ENCODE measurements at regions of chr14 and their contacts with region 1.

Region 1: GRCh38 chr14:30270200-30271161 is 288.5 kb upstream of the G2E3 start:
- DNase-seq: peak; percentile 88
- ATAC-seq: peak; percentile 100
- H3K4me3 ChIP-seq: peak overlapping the region; percentile 30; the same call in 1 of the 2 replicates
- H3K27ac ChIP-seq: no peak overlapping the region
- H3K4me1 ChIP-seq: peaks cover 9% of the 10 kb centered on the region; the same call in 1 of the 2 replicates
- H3K27me3 ChIP-seq: peaks cover 29% of the 10 kb centered on the region
- CTCF ChIP-seq: peak; percentile 92

Region 2: GRCh38 chr14:30005114-30005808 is 265.2 kb before region 1 on chr14:
- CTCF ChIA-PET with region 1: no interaction called
- POLR2A ChIA-PET with region 1: no interaction called
- intact Hi-C with region 1: loop called (anchors 5 kb)
- DNase-seq: peak; percentile 60
- ATAC-seq: peak; percentile 93
- H3K4me3 ChIP-seq: no peak overlapping the region
- H3K27ac ChIP-seq: no peak overlapping the region
- H3K4me1 ChIP-seq: 0 out of 2 replicates have a peak, but pooled peaks cover 4% of the 10 kb centered on the region
- H3K27me3 ChIP-seq: peaks cover 6% of the 10 kb centered on the region
- CTCF ChIP-seq: peak; percentile 86

Region 3: GRCh38 chr14:30223385-30223813 is 47.1 kb before region 1 on chr14:
- CTCF ChIA-PET with region 1: interaction called, 14 read pairs
- POLR2A ChIA-PET with region 1: no interaction called
- intact Hi-C with region 1: loop called (anchors 2 kb)
- DNase-seq: peak; percentile 99
- ATAC-seq: peak; percentile 93
- H3K4me3 ChIP-seq: 0 out of 2 replicates have a peak overlapping the region, but pooled peaks have one; percentile 7
- H3K27ac ChIP-seq: peak overlapping the region; percentile 47
- H3K4me1 ChIP-seq: peaks cover 47% of the 10 kb centered on the region
- H3K27me3 ChIP-seq: no peaks in the 10 kb centered on the region
- CTCF ChIP-seq: no peak

Region 4: DNA sequence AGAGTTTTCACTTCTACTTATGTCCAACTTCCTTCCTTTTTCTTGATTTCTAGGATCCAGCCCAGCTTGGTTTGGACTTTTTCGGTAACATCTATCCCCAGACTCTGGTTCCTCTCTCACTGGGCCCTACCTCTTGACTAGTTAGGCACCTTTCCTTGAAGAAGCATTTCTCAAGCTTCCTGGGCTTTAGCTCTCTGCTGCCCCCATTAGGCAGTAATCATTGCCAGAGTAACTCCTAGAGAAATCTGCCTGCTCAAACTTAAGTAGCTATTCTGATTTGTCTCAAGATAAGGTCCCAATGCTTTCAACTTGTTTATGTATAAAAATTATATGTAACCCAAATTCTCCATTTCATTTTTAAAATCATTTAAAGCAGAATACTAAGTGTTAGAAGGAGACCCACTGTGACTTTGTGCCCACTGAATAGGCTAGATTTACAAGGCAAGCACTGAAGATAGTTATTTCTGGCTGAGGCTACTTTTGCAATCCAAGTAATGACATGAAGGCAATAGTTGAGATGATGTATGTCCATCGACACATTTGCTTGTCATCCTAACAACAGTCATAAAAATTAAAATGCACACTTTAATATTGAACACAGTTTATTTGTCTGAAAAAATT is 13.5 kb after region 1 on chr14:
- CTCF ChIA-PET with region 1: interaction called, 17 read pairs
- POLR2A ChIA-PET with region 1: no interaction called
- intact Hi-C with region 1: no loop called
- DNase-seq: peak; percentile 78
- ATAC-seq: peak; percentile 77
- H3K4me3 ChIP-seq: no peak overlapping the region
- H3K27ac ChIP-seq: no peak overlapping the region
- H3K4me1 ChIP-seq: no peaks in the 10 kb centered on the region
- H3K27me3 ChIP-seq: peaks cover 8% of the 10 kb centered on the region; the same call in 1 of the 2 replicates
- CTCF ChIP-seq: peak; percentile 95